PC-9 (cell line): ENCODE measurements at regions of chr11 and their contacts with region 1.

Region 1: GRCh38 chr11:108222686-108223448 is at the start of gene ATM:
- DNase-seq: peak; percentile 98
- H3K4me3 ChIP-seq: peak within 1 kb of the TSS; percentile 97
- H3K27ac ChIP-seq: peak within 1 kb of the TSS; percentile 86
- H3K4me1 ChIP-seq: peaks cover 36% of the 10 kb centered on the region
- H3K27me3 ChIP-seq: no peaks in the 10 kb centered on the region
- CTCF ChIP-seq: peak; percentile 71; the same call in 1 of the 2 replicates
- total RNA-seq, gene ATM: 36.3 and 40.8 TPM in 2 replicates

Region 2: DNA sequence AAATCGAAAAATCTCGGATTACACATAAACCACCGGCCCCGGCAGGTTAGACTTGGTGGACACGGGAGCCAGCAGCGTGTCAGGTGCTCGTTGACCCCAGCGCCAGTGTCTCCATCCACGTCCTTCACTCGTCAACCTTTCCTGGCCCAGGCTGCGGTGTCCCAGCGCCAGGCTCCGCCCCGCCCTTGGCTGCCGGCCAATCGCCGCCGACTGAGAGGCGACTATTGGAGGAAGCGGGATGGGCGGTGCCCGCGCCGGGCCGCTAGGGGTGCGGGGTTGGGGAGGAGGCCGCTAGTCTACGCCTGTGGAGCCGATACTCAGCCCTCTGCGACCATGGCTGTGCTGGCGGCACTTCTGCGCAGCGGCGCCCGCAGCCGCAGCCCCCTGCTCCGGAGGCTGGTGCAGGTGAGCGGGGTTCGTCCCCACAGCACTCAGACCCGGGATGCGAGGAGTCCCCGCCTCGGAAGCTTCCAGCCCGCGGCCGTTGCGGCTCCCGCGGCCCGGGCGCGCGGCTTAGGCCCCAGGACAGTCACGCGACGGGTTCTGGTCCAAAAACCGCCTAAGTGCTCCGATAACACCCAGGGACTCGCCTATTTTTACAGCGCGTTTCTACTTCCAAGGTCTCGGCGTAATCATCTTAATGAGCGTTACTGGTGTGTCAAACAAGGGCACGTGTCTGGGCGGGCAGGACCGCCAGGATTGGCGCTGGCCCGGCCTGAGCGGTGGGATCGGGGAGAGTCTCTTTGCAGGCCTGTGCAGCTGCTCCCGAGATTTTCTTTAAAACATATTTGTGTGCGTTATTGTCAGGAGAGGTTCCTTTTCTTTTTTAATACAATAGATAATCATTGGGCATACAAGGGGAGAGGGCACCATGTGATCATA is 101.4 kb before region 1 on chr11 and contains the start of gene ACAT1:
- CTCF ChIA-PET with region 1: no interaction called
- POLR2A ChIA-PET with region 1: no interaction called
- intact Hi-C with region 1: loop called (anchors 2 kb)
- DNase-seq: peak; percentile 88 to 94
- H3K4me3 ChIP-seq: peak within 1 kb of the TSS; percentile 92
- H3K27ac ChIP-seq: no peak within 1 kb of the TSS
- H3K4me1 ChIP-seq: peaks cover 12% of the 10 kb centered on the region
- H3K27me3 ChIP-seq: no peaks in the 10 kb centered on the region
- CTCF ChIP-seq: peak; percentile 62
- total RNA-seq, gene ACAT1: 31.8 and 34.4 TPM in 2 replicates

Region 3: DNA sequence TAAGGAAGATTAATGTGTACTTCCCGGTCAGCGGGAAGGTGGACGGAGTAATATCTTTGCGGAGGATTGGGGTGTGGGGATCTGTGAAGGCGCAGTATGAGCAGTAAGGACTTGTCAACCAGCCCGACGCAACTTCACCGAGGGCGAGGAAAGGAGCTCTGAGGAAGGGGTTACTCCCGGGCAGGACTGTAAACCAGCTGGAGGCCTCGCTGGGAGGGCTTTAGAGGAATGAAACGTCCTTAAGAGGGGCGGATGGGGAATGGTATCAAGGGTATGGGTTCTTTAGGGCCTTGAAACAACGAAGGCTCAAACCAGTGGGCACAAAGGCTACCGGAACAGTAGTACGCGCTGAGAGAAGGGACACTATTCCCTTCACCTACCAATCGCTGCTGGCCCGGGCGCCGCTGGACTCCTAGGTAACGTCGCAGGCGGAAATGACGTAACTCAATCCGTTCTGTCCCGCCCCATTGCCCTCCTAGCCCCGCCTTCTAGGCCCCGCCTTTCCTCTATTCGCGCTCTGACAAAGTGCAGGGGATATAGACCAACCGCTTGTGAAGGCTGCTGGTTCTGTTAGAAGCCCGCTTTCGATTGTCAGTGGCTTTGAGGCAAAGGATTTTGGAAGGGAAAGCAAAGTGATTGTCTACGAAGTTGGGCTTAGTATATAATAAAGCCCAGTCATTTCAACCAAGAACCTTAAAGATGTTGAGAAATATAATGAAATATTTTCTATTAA is 244.4 kb after region 1 on chr11 and contains the start of gene C11orf65:
- CTCF ChIA-PET with region 1: no interaction called
- POLR2A ChIA-PET with region 1: no interaction called
- intact Hi-C with region 1: loop called (anchors 5 kb)
- DNase-seq: peak; percentile 93 to 94
- H3K4me3 ChIP-seq: peak within 1 kb of the TSS; percentile 80
- H3K27ac ChIP-seq: peak within 1 kb of the TSS; percentile 92
- H3K4me1 ChIP-seq: peaks cover 16% of the 10 kb centered on the region
- H3K27me3 ChIP-seq: no peaks in the 10 kb centered on the region
- CTCF ChIP-seq: no peak
- total RNA-seq, gene C11orf65: 1.7 and 1.9 TPM in 2 replicates

Region 4: DNA sequence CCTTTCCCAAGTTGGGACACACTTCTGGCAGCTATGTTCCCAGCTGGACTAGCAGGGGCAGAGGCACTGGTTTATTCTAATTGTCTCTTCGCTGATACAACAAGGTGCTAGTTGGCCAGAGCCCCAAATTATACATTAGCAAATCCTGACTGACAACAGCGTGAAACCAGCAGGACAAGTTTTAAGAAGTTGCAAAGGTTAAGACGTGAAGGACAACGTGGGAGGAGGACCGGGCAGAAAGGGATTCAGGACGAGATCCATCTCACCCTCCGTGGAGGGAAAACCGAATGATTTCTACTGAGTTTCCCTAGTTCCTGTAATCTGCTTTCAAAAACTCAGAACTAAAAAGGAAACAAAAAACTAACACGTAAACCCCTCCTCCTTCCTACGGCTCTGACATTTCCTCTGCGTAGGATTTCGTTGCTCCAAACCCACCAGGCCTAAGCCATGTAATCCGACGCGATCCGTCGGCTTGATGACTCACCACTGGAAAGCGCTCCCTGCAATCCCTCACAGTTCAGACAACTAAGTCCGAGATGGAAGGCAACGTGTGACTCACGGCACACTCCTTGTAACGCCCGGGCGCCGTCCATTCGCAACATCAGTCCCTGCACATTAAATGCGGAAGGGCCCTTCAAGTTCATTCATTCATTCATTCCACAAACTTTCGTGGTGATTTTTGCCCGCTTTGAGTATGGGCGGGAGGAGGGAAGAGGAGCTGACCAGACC is 274.6 kb after region 1 on chr11:
- CTCF ChIA-PET with region 1: no interaction called
- POLR2A ChIA-PET with region 1: no interaction called
- intact Hi-C with region 1: loop called (anchors 1 kb)
- DNase-seq: peak; percentile 83 to 98
- H3K4me3 ChIP-seq: peak overlapping the region; percentile 78
- H3K27ac ChIP-seq: peak overlapping the region; percentile 87
- H3K4me1 ChIP-seq: peaks cover 24% of the 10 kb centered on the region
- H3K27me3 ChIP-seq: no peaks in the 10 kb centered on the region
- CTCF ChIP-seq: 0 out of 2 replicates have a peak, but pooled peaks have one; percentile 6

Region 5: DNA sequence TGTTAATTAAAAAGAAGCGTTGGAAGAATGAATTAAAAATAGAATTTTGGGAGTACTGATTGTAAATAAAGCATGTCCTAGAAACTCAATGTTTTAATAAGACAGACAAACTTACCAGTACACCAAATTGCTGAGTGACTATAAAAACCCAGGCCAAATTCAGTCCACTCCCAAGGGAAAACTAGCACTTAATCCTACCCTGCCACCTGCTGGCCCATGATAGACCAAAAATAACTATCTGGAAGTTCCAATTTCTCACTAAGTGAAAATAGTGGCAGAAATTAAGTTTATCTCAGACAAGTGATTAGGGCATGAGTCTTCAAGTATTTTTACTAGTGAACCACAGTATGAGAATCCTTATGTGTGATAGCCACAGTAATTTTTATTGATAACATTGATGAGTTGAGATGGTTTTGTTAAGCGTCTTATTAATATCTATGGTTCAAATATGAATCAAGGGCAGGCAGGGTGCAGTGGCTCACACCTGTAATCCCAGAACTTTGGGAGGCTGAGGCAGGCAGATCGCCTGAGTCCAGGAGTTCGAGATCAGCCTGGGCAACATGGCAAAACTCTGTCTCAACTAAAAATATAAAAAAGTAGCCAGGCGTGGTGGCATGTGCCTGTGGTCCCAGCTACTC is 432.2 kb after region 1 on chr11:
- CTCF ChIA-PET with region 1: no interaction called
- POLR2A ChIA-PET with region 1: no interaction called
- intact Hi-C with region 1: loop called (anchors 2 kb)
- DNase-seq: peak; percentile 47 to 60
- H3K4me3 ChIP-seq: no peak overlapping the region
- H3K27ac ChIP-seq: no peak overlapping the region
- H3K4me1 ChIP-seq: no peaks in the 10 kb centered on the region
- H3K27me3 ChIP-seq: no peaks in the 10 kb centered on the region
- CTCF ChIP-seq: peak; percentile 93